Activated B cell treated with CpG ODN at 0.5 μM for 24 hours (primary cell): ENCODE measurements at regions of chr3 and their contacts with region 1.

Region 1: GRCh38 chr3:49339945-49340800 is at the start of gene USP4:
- DNase-seq: peak; percentile 88
- ATAC-seq: peak; percentile 84
- H3K4me3 Mint-ChIP-seq: peak within 1 kb of the TSS; percentile 95
- H3K27ac Mint-ChIP-seq: peak within 1 kb of the TSS; percentile 99
- H3K4me1 Mint-ChIP-seq: peaks cover 64% of the 10 kb centered on the region
- H3K27me3 Mint-ChIP-seq: no peaks in the 10 kb centered on the region
- CTCF ChIP-seq: no peak
- total RNA-seq, gene USP4: 86.7 and 115 TPM in 2 replicates

Region 2: GRCh38 chr3:49007068-49007770 is 333.0 kb before region 1 on chr3 and contains the start of gene WDR6:
- CTCF ChIA-PET with region 1: no interaction called
- POLR2A ChIA-PET with region 1: interaction called, 6 read pairs
- intact Hi-C with region 1: loop called (anchors 5 kb)
- DNase-seq: peak; percentile 91
- ATAC-seq: peak; percentile 89
- H3K4me3 Mint-ChIP-seq: peak within 1 kb of the TSS; percentile 100
- H3K27ac Mint-ChIP-seq: peak within 1 kb of the TSS; percentile 99
- H3K4me1 Mint-ChIP-seq: peaks cover 21% of the 10 kb centered on the region
- H3K27me3 Mint-ChIP-seq: no peaks in the 10 kb centered on the region
- CTCF ChIP-seq: no peak
- total RNA-seq, gene WDR6: 205 and 250 TPM in 2 replicates

Region 3: DNA sequence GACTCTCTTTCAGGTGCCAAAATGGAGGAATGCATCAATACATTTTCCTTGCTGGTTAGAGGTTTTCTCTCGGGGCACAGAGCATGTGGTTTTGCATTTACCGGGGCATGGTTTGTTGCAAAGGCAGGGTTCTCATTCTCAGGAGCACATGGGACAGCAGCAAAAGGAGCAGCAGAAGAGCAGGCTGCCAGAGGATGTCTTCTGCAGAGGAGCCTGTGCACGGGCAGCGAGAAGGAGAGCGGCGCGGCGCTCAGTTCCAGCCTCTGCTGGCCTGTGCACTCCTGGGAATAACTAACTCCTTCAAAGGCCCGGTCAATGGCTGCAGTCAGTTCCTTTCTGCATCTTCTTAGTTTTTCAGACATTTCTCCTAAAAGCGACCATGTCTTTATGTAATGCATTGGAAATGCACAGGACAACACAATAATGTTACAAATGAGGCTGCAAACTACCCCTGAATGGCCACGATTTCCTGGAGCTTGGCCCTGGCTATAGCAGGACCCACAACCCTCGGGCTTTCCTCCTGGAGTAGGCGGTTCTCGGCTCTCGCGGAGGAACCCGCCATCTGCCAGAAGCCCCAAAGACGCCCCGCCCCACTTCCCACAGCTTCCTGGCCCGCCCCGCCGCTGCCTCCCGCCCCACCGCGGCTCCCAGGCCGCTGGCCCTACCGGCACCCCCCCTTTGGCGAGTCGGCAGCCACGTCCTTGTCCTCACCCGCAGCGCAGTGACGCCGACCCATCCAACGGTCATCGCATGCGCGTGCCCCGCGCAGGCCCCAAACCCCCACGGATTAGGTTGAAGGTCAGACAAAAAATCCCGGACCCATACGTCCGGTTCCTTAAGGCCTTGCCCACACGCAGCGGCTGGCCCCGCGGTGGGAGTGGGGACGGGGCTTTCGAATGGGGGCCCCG is 63.4 kb before region 1 on chr3 and contains the start of gene C3orf62:
- CTCF ChIA-PET with region 1: no interaction called
- POLR2A ChIA-PET with region 1: interaction called, 10 read pairs
- intact Hi-C with region 1: no loop called
- DNase-seq: peak; percentile 61
- ATAC-seq: peak; percentile 94
- H3K4me3 Mint-ChIP-seq: peak within 1 kb of the TSS; percentile 89
- H3K27ac Mint-ChIP-seq: peak within 1 kb of the TSS; percentile 92
- H3K4me1 Mint-ChIP-seq: peaks cover 20% of the 10 kb centered on the region
- H3K27me3 Mint-ChIP-seq: no peaks in the 10 kb centered on the region
- CTCF ChIP-seq: no peak
- total RNA-seq, gene C3orf62: 5.3 and 6.1 TPM in 2 replicates

Region 4: DNA sequence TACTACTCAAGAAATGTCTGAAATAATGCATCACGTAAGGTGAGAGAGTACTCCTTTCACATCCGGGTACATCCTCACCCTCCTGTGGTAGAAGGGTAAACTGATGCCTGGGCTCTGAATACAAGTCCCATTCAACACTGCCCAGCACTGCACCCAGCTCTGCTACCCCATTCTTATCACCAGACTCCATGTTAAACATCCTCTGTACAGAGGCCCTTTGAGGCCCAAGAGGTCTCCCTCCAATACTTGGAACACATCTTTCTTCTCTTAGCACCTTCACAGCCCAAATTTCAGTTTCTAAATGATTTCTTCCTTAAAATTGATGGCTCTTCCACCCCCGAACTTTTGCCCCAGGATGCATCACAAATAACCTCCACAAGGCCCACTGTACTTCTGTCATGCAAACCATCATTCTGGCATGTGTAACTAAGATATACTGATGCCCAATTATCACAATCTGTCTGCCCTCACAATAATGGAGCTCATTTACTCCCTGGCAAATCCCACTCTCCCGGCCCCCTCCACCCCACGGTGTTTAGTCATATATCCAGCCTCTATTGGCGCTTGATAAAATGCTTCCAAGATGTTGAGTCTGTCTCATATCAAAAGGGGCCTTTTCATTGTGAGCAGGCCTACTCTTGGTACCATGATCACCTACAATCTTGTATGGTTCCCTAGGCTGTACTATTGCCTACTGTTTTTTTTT is 30.6 kb after region 1 on chr3:
- CTCF ChIA-PET with region 1: interaction called, 3 read pairs
- POLR2A ChIA-PET with region 1: interaction called, 10 read pairs
- intact Hi-C with region 1: no loop called
- DNase-seq: no peak
- ATAC-seq: no peak
- H3K4me3 Mint-ChIP-seq: no peak overlapping the region
- H3K27ac Mint-ChIP-seq: peak overlapping the region; percentile 2
- H3K4me1 Mint-ChIP-seq: peaks cover 14% of the 10 kb centered on the region
- H3K27me3 Mint-ChIP-seq: no peaks in the 10 kb centered on the region
- CTCF ChIP-seq: no peak

Region 5: DNA sequence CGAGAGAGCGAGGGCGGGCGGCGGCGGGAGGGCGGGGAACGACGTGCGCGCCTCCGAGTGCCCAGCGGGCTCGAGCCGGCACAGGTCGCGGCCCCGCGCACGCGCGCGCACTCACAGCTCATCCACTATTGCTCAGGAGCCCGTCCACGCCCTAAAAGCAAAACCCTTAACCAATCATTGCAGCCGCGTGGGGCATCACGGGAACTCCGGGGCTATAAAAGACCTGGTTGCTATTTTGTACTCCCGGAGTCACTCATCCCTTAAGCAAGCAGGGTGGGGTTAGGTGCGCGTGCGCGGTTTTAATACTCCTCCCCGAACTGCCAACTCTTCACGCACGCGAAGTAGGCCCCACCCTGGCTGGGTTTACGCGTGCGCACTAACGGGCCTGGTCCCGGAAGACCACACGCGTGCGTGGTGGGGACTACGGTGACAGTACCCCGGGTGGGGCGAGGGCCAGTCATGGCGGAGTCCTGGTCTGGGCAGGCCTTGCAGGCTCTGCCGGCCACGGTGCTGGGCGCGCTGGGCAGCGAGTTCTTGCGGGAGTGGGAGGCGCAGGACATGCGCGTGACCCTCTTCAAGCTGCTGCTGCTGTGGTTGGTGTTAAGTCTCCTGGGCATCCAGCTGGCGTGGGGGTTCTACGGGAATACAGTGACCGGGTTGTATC is 71.9 kb after region 1 on chr3 and contains the starts of genes RHOA and TCTA:
- CTCF ChIA-PET with region 1: interaction called, 12 read pairs
- POLR2A ChIA-PET with region 1: interaction called, 78 read pairs
- intact Hi-C with region 1: loop called (anchors 1 kb)
- DNase-seq: peak; percentile 95
- ATAC-seq: peak; percentile 82
- H3K4me3 Mint-ChIP-seq: peak within 1 kb of the TSS; percentile 92
- H3K27ac Mint-ChIP-seq: peak within 1 kb of the TSS; percentile 92
- H3K4me1 Mint-ChIP-seq: peaks cover 79% of the 10 kb centered on the region
- H3K27me3 Mint-ChIP-seq: no peaks in the 10 kb centered on the region
- CTCF ChIP-seq: no peak
- total RNA-seq, gene RHOA: 399 and 425 TPM in 2 replicates
- total RNA-seq, gene TCTA: 26.4 and 32.2 TPM in 2 replicates

Region 6: GRCh38 chr3:49454458-49454857 is 114.3 kb after region 1 on chr3:
- CTCF ChIA-PET with region 1: interaction called, 52 read pairs
- POLR2A ChIA-PET with region 1: interaction called, 25 read pairs
- intact Hi-C with region 1: loop called (anchors 1 kb)
- DNase-seq: no peak
- ATAC-seq: no peak
- H3K4me3 Mint-ChIP-seq: no peak overlapping the region
- H3K27ac Mint-ChIP-seq: no peak overlapping the region
- H3K4me1 Mint-ChIP-seq: no peaks in the 10 kb centered on the region
- H3K27me3 Mint-ChIP-seq: no peaks in the 10 kb centered on the region
- CTCF ChIP-seq: no peak

Region 7: GRCh38 chr3:50235716-50236496 is 895.7 kb after region 1 on chr3 and contains the start of gene GNAI2:
- CTCF ChIA-PET with region 1: no interaction called
- POLR2A ChIA-PET with region 1: interaction called, 7 read pairs
- intact Hi-C with region 1: loop called (anchors 2 kb)
- DNase-seq: peak; percentile 97
- ATAC-seq: peak; percentile 89
- H3K4me3 Mint-ChIP-seq: peak within 1 kb of the TSS; percentile 95
- H3K27ac Mint-ChIP-seq: peak within 1 kb of the TSS; percentile 91
- H3K4me1 Mint-ChIP-seq: peaks cover 54% of the 10 kb centered on the region
- H3K27me3 Mint-ChIP-seq: no peaks in the 10 kb centered on the region
- CTCF ChIP-seq: no peak
- total RNA-seq, gene GNAI2: 281 and 295 TPM in 2 replicates